A673 (cell line): ENCODE measurements at regions of chr2 and their contacts with region 1.

Region 1: DNA sequence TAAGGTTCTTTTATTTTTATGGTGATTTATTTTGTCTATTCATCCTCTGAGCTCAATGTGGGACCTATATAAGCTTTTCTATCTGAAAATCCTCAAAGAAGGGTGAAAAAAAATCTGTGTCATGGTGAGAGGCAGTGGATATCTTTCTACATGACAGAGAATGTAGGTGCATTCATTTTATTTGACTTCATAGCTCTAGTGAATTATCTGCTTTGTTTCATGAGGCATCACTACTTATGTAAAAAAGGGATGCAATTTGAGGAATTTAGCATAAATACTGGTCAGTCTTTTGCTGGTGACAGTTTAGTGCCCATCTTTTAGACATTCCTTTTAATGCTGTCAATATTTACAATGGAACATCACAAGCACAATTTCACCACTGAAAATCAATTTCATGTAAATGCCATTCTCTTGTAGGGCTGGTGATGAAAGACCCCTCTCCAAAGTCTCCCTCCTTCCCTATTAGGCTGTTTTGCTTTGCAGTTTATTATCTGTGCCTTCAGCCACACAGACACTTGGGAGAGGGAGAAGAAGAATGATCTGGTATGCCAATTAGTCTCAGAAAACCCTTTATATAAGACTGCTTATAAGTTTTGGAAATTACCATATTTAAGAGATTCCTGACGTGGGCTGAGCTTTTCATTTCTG is 148.3 kb upstream of the NXPH2 start:
- DNase-seq: peak; percentile 67
- H3K4me3 ChIP-seq: no peak overlapping the region
- H3K27ac ChIP-seq: peak overlapping the region; percentile 18
- H3K4me1 ChIP-seq: peaks cover 31% of the 10 kb centered on the region
- H3K27me3 ChIP-seq: no peaks in the 10 kb centered on the region
- CTCF ChIP-seq: no peak

Region 2: GRCh38 chr2:139353874-139354273 is 425.4 kb after region 1 on chr2:
- CTCF ChIA-PET with region 1: no interaction called
- POLR2A ChIA-PET with region 1: interaction called, 3 read pairs
- intact Hi-C with region 1: loop called (anchors 5 kb)
- DNase-seq: peak; percentile 39
- H3K4me3 ChIP-seq: no peak overlapping the region
- H3K27ac ChIP-seq: no peak overlapping the region
- H3K4me1 ChIP-seq: no peaks in the 10 kb centered on the region
- H3K27me3 ChIP-seq: no peaks in the 10 kb centered on the region
- CTCF ChIP-seq: peak; percentile 42; the same call in 1 of the 2 replicates